ENCODE measurements at regions of chr1 and their contacts with region 1.

Region 1: GRCh38 chr1:23634842-23635651 is 56.6 kb upstream of the RPL11 start:
- DNase-seq: peak; percentile 83
- H3K4me3 ChIP-seq: peak overlapping the region; percentile 24 to 78 (median 41)
- H3K27ac ChIP-seq: peak overlapping the region; percentile 67
- H3K4me1 ChIP-seq: no peaks in the 10 kb centered on the region
- H3K27me3 ChIP-seq: peaks cover 0 to 4% of the 10 kb centered on the region in 2 experiments
- CTCF ChIP-seq: peak; percentile 85 to 93
- POLR2A ChIP-seq: no peak

Region 2: DNA sequence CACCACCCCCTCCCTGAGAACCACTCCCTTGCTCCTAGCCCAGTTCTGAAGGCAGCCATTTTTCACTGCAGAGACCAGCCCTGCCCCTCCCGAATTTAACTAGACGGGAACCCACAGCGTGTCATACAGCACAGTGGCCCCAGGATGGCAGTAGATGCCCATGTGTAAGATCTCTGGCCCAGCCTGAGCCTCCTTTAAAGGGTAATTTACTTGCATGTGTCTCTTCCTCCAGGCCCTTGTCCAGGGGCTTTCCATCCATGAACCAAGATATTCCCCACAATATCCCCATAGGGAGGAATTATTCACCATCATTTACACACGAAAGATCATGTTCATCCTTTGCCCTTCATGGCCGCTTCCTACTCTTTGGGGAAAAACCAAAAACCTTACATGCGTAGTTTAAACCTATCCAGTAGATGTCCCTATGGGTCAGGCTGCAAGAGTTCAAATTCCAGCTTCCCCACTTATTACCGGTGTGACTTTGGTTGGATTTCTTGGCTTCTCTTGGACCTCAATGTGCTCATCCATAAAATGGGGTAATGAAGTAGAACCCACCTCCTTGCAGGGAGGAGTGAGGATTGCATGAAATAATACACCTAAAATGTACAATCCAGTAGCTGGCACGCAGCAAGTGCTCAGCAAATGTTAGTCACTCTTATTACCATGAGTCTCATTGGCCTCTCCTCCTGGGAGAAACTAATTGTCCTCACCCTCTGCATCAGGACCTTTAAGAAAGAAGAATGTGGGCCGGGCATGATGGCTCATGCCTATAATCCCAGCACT is 658.4 kb before region 1 on chr1:
- CTCF ChIA-PET with region 1: interaction called, 6 read pairs
- POLR2A ChIA-PET with region 1: no interaction called
- dilution Hi-C with region 1: no loop called
- intact Hi-C with region 1: loop called (anchors 10 kb)
- DNase-seq: peak; percentile 83
- H3K4me3 ChIP-seq: no peak overlapping the region
- H3K27ac ChIP-seq: no peak overlapping the region
- H3K4me1 ChIP-seq: peaks cover 12% of the 10 kb centered on the region
- H3K27me3 ChIP-seq: no peaks in the 10 kb centered on the region
- CTCF ChIP-seq: peak; percentile 81 to 87
- POLR2A ChIP-seq: no peak

Region 3: GRCh38 chr1:23567996-23568607 is 66.9 kb before region 1 on chr1:
- CTCF ChIA-PET with region 1: interaction called, 1,069 read pairs
- POLR2A ChIA-PET with region 1: no interaction called
- dilution Hi-C with region 1: no loop called
- intact Hi-C with region 1: no loop called
- DNase-seq: peak; percentile 34
- H3K4me3 ChIP-seq: peak overlapping the region; percentile 26 to 51 (median 44)
- H3K27ac ChIP-seq: peak overlapping the region; percentile 47
- H3K4me1 ChIP-seq: peaks cover 7% of the 10 kb centered on the region
- H3K27me3 ChIP-seq: no peaks in the 10 kb centered on the region
- CTCF ChIP-seq: no peak
- POLR2A ChIP-seq: no peak

Region 4: DNA sequence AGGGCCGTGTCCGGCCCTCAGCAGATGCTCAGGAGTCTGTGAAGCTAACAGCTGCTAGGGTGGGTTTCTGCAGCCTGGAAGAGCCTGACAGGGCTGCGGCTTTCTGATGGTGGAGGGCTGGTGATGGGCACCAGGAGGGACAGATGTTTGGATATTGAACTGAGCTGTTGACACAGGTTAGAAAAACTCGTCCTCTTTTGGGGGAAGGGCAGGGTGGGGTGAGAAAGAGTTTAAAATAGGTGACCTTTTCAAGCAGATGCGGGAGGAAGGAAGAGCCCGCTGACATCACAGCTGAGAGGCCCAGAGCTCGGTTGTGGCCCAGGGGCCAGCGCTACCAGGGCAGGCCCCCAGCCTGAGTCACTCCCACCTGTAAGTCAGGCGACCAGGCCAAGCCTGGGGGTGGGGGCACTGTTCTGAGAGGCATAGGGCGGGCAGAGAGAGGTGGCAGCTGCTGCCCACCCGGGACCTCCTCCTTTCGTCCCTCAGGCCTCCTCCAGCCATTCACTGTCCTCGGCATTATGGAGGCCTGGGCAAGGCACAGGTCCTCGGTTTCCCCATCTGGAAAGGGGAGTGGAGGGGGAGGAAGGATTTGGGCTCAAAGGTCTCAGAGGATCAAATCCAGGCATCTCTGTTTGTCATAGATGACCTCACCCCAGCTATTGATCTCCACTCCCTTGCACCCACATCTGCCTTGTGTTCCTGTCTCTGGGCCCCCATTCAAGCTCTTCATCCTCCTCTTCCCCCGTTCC is 43.4 kb before region 1 on chr1:
- CTCF ChIA-PET with region 1: interaction called, 10 read pairs
- POLR2A ChIA-PET with region 1: no interaction called
- dilution Hi-C with region 1: no loop called
- intact Hi-C with region 1: no loop called
- DNase-seq: no peak
- H3K4me3 ChIP-seq: no peak overlapping the region
- H3K27ac ChIP-seq: no peak overlapping the region
- H3K4me1 ChIP-seq: no peaks in the 10 kb centered on the region
- H3K27me3 ChIP-seq: peaks cover 4 to 10% of the 10 kb centered on the region in 2 experiments
- CTCF ChIP-seq: no peak
- POLR2A ChIP-seq: no peak

Region 5: GRCh38 chr1:23619299-23620188 is 15.5 kb before region 1 on chr1:
- CTCF ChIA-PET with region 1: interaction called, 62 read pairs
- POLR2A ChIA-PET with region 1: interaction called, 7 read pairs
- dilution Hi-C with region 1: no loop called
- intact Hi-C with region 1: no loop called
- DNase-seq: peak; percentile 46
- H3K4me3 ChIP-seq: peak overlapping the region in 1 of 3 experiments; percentile 9
- H3K27ac ChIP-seq: no peak overlapping the region
- H3K4me1 ChIP-seq: peaks cover 4% of the 10 kb centered on the region
- H3K27me3 ChIP-seq: peaks cover 28 to 44% of the 10 kb centered on the region in 2 experiments
- CTCF ChIP-seq: no peak
- POLR2A ChIP-seq: no peak

Region 6: GRCh38 chr1:23657659-23658275 is 22.7 kb after region 1 on chr1:
- CTCF ChIA-PET with region 1: interaction called, 41 read pairs
- POLR2A ChIA-PET with region 1: no interaction called
- dilution Hi-C with region 1: no loop called
- intact Hi-C with region 1: no loop called
- DNase-seq: peak; percentile 42
- H3K4me3 ChIP-seq: no peak overlapping the region
- H3K27ac ChIP-seq: no peak overlapping the region
- H3K4me1 ChIP-seq: no peaks in the 10 kb centered on the region
- H3K27me3 ChIP-seq: peaks cover 0 to 4% of the 10 kb centered on the region in 2 experiments
- CTCF ChIP-seq: peak; percentile 94 to 95
- POLR2A ChIP-seq: no peak

Region 7: GRCh38 chr1:23875382-23875781 is 240.3 kb after region 1 on chr1:
- CTCF ChIA-PET with region 1: no interaction called
- POLR2A ChIA-PET with region 1: no interaction called
- dilution Hi-C with region 1: no loop called
- intact Hi-C with region 1: no loop called
- DNase-seq: no peak
- H3K4me3 ChIP-seq: no peak overlapping the region
- H3K27ac ChIP-seq: no peak overlapping the region
- H3K4me1 ChIP-seq: no peaks in the 10 kb centered on the region
- H3K27me3 ChIP-seq: no peaks in the 10 kb centered on the region
- CTCF ChIP-seq: no peak
- POLR2A ChIP-seq: no peak